ENCODE measurements at regions of chr11 and their contacts with region 1.

Region 1: DNA sequence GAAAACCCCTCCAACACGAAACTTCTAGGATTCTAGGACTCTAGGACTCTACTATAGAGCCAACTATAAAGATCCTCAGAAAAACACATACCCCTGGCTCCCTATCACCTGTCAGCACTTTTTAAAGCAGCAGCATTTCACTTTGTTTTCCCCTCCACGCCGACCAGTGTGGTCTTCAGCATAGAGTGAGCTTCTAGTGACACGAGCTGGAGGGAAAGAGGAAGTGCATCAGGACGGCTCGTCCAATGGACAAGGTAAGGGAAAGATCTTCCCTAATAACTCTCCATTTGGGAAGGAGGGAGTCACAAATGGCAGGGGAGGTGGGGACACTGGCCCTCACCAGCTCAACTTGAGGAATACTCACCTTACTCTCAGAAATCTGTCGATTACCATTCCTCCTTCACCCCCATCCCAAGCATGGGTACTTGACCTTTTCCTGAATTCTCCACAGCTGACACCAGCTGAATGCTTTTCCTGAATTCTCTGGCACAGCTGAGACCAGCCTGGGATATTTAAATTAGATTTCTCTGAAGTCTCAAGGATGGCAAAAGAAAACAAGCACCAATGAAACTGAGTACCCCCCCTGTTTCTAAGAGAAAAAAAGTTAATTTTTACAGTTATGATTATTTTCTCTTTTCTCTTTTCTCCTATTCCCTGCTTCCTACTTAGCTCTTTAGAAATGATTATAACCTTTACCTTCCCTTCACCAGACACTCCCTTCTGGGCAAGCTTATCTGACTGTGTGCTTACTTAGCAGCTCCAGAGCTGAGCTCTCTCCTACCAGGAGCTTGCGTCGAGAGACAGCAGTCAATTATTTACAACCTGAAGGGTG is 33.3 kb upstream of the NNMT start:
- DNase-seq: peak; percentile 24
- H3K4me3 Mint-ChIP-seq: no peak overlapping the region
- H3K27ac Mint-ChIP-seq: no peak overlapping the region
- H3K4me1 Mint-ChIP-seq: no peaks in the 10 kb centered on the region
- H3K27me3 Mint-ChIP-seq: peaks cover 1% of the 10 kb centered on the region

Region 2: DNA sequence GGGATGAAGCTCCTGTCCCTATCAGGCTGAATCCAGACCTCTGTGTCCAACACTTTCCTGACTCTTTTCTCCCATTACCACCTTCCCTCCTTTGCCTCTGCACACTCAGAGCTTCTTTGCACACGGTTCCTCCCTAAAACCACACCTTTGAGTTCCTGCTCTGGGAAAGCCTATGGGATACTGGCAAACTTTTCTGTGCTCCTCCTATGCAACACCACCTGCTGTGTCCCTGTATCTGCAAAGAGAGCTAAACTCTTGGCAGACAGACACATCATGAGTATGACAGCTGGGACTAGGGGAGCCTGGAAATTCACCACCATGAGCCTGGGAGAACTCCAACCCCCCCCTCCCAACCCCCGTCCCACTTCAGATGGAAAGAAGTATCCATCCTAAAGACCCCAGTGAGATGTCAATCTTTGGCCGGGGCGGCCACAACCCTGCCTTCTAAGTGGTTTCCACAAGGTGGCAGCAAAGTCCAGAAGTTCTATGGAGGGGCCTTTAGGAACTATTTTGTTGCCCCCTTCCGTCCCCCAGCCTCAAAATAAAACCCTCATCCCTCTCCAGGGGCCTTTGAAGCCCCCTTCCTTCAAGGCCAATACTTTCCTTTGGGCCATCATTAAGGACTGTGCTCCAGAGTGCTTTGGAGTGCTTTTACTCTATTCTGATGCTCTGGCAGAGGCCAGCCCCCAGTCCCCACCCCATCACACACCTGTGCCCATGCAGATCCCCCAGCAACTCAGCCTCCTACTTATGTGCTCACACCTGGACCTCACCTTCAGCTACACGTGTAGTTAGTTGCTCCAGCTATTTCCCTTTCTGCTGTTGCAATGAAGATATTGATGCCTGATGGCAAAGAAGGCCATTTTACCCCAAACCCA is 268.6 kb before region 1 on chr11:
- CTCF ChIA-PET with region 1: interaction called, 217 read pairs
- POLR2A ChIA-PET with region 1: interaction called, 3 read pairs
- DNase-seq: peak; percentile 34
- H3K4me3 Mint-ChIP-seq: no peak overlapping the region
- H3K27ac Mint-ChIP-seq: no peak overlapping the region
- H3K4me1 Mint-ChIP-seq: no peaks in the 10 kb centered on the region
- H3K27me3 Mint-ChIP-seq: peaks cover 12% of the 10 kb centered on the region

Region 3: DNA sequence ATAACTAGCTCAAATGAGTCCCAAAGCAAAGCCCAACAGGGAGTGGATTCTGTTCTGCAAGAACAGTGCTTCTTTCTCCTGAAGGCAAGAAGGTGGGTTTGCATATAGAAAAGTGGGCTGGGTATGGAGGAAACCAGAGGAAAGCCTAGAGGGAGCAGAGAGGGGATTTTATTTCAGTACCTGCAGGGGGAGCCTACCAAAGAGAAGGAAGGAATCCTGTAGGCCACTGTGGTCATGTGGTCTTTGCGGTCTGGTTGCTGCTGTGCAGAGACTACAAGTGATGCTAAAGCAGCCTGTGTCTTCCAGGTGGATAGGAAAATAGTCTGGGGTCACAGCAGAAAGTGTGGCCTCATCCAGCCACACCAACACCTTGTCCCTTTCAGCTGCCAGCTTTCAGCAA is 236.5 kb before region 1 on chr11:
- CTCF ChIA-PET with region 1: interaction called, 64 read pairs
- POLR2A ChIA-PET with region 1: no interaction called
- DNase-seq: peak; percentile 52
- H3K4me3 Mint-ChIP-seq: no peak overlapping the region
- H3K27ac Mint-ChIP-seq: no peak overlapping the region
- H3K4me1 Mint-ChIP-seq: peaks cover 6% of the 10 kb centered on the region
- H3K27me3 Mint-ChIP-seq: peaks cover 20% of the 10 kb centered on the region

Region 4: DNA sequence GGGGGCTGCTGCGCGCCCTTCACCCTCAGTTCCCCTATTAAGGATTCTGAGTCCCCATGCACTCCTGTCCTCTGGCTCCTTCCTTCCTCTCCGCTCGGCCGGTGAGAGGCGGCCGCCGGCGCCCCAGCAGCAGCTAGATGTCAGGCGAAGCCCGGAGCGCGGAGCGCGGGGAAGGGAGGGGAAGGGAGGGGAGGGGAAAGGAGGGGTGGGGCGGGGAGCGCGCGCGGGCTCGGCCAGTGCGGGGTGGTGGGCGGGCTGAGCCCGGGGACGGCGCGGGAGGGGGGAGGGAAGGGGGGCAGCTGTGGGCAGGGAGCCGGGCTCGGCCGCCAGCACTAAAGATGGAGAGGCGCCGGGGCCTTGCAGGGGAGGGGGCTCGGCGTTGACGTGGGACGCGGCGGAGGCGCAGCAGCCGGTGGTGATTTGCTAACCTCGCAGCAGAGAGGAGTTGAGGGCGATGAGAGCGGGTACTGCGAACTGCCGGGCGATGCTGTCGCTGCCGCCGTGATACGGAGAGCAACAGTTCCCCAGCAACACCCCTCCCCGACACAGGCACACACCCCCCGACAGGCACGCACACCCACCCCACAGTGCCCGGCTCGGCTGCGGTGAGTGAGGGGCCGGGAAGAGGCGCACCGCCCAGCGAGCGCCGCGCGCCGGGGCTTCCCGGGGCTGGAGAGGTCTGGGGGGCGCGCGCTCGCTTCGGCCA is 203.5 kb before region 1 on chr11 and contains the start of gene ZBTB16:
- CTCF ChIA-PET with region 1: interaction called, 37 read pairs
- POLR2A ChIA-PET with region 1: no interaction called
- DNase-seq: peak; percentile 63
- H3K4me3 Mint-ChIP-seq: peak within 1 kb of the TSS; percentile 81
- H3K27ac Mint-ChIP-seq: peak within 1 kb of the TSS; percentile 62
- H3K4me1 Mint-ChIP-seq: peaks cover 20% of the 10 kb centered on the region
- H3K27me3 Mint-ChIP-seq: peaks cover 64% of the 10 kb centered on the region
- total RNA-seq, gene ZBTB16: 11.0 to 11.8 TPM

Region 5: DNA sequence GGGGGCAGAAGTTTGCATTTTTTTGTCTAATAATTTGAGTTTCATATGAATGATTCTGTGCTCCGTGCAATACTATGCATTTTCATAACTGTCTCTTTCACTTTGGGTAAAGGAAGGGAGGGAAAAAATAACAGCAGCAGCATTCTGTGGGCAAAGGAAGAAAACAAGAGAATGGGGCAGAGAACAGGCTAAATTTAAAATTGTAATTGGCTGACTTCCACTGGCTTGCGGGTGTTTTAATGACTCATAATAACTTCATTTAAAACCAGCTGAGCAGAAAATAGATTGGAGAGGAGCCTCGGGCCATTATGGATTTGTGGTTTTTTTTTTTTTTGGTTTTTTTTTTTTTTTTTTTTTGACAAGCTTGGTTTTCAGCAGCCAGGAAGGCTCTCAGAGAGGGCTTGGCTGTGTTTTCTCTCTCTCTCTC is 96.0 kb before region 1 on chr11:
- CTCF ChIA-PET with region 1: interaction called, 10 read pairs
- POLR2A ChIA-PET with region 1: no interaction called
- DNase-seq: no peak
- H3K4me3 Mint-ChIP-seq: no peak overlapping the region
- H3K27ac Mint-ChIP-seq: peak overlapping the region; percentile 73
- H3K4me1 Mint-ChIP-seq: peaks cover 61% of the 10 kb centered on the region
- H3K27me3 Mint-ChIP-seq: peaks cover 2% of the 10 kb centered on the region

Region 6: DNA sequence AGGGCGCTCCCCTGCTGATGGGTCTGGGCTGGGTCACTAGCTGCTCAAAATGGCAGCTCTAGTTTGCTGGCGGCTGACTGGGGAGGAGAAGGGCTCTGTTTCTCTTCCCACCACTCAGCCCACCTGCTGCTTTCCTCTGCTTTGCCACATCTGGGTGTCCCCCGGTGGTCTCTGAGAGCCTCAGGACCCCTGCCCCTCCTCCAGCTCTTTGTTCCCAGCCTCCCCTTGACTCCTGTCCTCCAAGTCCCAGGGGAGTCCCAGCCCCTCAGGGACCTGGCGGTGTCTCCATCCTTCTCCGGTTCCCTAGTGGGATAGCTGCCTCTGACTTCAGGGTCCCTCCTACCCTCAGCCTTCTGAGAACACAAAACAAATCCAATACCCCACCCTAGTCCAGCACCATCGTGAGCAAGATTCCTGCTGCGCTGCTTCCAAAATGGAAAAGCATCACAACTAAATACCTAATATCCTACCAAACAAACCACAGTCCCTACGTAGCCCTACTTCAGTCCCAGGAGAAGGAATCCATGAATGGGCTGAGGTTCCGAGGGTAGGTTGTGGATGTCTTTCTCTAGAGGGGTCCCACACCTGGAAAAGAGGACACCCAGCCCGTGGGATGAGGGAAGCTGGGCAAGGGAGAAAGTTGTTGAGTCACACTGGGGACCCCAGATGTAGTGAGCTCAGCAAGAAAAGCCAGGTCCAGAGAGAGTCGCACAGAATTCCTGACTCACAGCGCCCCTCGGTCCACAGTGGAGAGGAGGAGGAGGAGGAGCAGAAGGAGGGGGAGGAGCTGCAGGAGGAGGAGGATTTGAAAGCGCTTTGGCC is 11.7 kb before region 1 on chr11:
- CTCF ChIA-PET with region 1: interaction called, 37 read pairs
- POLR2A ChIA-PET with region 1: interaction called, 3 read pairs
- DNase-seq: no peak
- H3K4me3 Mint-ChIP-seq: no peak overlapping the region
- H3K27ac Mint-ChIP-seq: no peak overlapping the region
- H3K4me1 Mint-ChIP-seq: no peaks in the 10 kb centered on the region
- H3K27me3 Mint-ChIP-seq: no peaks in the 10 kb centered on the region

Measured in activated CD4-positive, alpha-beta memory T cell treated with anti-CD3 and anti-CD28 coated beads, Interleukin-2, amount 10 ng/mL, durations not matched to agents 7 days and 5 days (primary cell).